Activated CD4-positive, alpha-beta T cell treated with anti-CD3 and anti-CD28 coated beads for 36 hours (primary cell): ENCODE measurements at regions of chr1 and their contacts with region 1.

Region 1: GRCh38 chr1:84862810-84863251 is 30.2 kb downstream of the LPAR3 start:
- DNase-seq: peak; percentile 62
- ATAC-seq: peak; percentile 90
- H3K4me3 Mint-ChIP-seq: peak overlapping the region; percentile 53
- H3K27ac Mint-ChIP-seq: peak overlapping the region; percentile 67
- H3K4me1 Mint-ChIP-seq: peaks cover 45% of the 10 kb centered on the region
- H3K27me3 Mint-ChIP-seq: peaks cover 3% of the 10 kb centered on the region

Region 2: GRCh38 chr1:84877592-84877991 is 14.8 kb after region 1 on chr1:
- CTCF ChIA-PET with region 1: no interaction called
- POLR2A ChIA-PET with region 1: no interaction called
- intact Hi-C with region 1: loop called in 1 of 2 experiments (anchors 1 kb)
- DNase-seq: no peak
- ATAC-seq: no peak
- H3K4me3 Mint-ChIP-seq: no peak overlapping the region
- H3K27ac Mint-ChIP-seq: no peak overlapping the region
- H3K4me1 Mint-ChIP-seq: no peaks in the 10 kb centered on the region
- H3K27me3 Mint-ChIP-seq: peaks cover 3% of the 10 kb centered on the region